Activated T-helper 2 cell treated with anti-CD3 and anti-CD28 coated beads, Interferon-gamma antibody, Interleukin-2, Interleukin-4, amounts not matched to agents 10 μg/mL and 5 μg/mL and 100 μg/mL, durations not matched to agents 14 hours and 24 hours and 36 hours (primary cell): ENCODE measurements at regions of chr6 and their contacts with region 1.

Region 1: DNA sequence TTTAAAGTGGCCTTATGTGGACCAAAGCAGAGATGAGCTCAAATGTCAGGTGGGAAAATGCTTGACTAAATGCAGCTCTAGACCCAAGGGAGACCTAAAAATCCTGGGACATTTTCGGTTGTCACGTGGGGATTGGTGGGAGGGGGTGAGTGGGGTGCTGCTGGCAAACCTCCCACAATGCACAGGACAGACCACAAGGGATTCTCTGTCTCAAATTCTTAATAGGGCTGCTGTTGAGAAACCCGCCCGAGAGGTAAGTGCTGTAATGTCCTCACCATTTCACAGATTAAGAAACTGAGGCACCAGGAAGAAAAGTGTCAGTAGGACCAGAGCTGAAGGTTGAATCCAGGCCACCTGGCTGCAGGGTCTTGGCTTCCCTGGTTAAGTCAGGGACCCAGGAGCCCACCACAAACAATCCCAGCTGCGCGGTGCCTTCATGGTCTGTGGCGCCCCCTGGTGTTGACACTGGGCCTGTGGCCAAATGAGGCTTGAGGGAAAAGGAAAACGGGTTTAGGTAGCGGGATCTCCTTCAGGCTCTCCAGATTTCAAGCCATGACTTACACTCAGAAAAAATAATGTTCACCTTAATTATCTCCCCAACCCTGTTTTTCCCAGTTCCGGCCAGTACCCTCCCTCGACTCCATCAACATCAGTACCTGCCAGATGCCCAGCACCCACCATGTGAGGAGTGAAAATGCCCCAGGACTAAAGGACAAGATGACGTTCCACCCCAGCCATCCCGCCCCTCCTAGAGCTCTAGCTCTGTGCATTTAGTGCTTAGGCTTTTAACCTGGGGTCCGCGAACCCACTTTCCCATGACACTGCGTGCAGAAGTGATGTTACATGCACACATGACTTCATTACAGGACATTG is 7.2 kb downstream of the HLA-G start:
- DNase-seq: no peak
- H3K4me3 Mint-ChIP-seq: no peak overlapping the region
- H3K27ac Mint-ChIP-seq: no peak overlapping the region
- H3K4me1 Mint-ChIP-seq: peaks cover 3% of the 10 kb centered on the region
- H3K27me3 Mint-ChIP-seq: peaks cover 69% of the 10 kb centered on the region

Region 2: GRCh38 chr6:29649701-29650673 is 184.8 kb before region 1 on chr6:
- intact Hi-C with region 1: loop called (anchors 5 kb)
- DNase-seq: peak; percentile 94
- H3K4me3 Mint-ChIP-seq: peak overlapping the region; percentile 88
- H3K27ac Mint-ChIP-seq: peak overlapping the region; percentile 98
- H3K4me1 Mint-ChIP-seq: peaks cover 7% of the 10 kb centered on the region
- H3K27me3 Mint-ChIP-seq: peaks cover 4% of the 10 kb centered on the region

Region 3: GRCh38 chr6:29705389-29706231 is 129.2 kb before region 1 on chr6:
- intact Hi-C with region 1: loop called (anchors 2 kb)
- DNase-seq: no peak
- H3K4me3 Mint-ChIP-seq: no peak overlapping the region
- H3K27ac Mint-ChIP-seq: no peak overlapping the region
- H3K4me1 Mint-ChIP-seq: peaks cover 40% of the 10 kb centered on the region
- H3K27me3 Mint-ChIP-seq: peaks cover 17% of the 10 kb centered on the region

Region 4: DNA sequence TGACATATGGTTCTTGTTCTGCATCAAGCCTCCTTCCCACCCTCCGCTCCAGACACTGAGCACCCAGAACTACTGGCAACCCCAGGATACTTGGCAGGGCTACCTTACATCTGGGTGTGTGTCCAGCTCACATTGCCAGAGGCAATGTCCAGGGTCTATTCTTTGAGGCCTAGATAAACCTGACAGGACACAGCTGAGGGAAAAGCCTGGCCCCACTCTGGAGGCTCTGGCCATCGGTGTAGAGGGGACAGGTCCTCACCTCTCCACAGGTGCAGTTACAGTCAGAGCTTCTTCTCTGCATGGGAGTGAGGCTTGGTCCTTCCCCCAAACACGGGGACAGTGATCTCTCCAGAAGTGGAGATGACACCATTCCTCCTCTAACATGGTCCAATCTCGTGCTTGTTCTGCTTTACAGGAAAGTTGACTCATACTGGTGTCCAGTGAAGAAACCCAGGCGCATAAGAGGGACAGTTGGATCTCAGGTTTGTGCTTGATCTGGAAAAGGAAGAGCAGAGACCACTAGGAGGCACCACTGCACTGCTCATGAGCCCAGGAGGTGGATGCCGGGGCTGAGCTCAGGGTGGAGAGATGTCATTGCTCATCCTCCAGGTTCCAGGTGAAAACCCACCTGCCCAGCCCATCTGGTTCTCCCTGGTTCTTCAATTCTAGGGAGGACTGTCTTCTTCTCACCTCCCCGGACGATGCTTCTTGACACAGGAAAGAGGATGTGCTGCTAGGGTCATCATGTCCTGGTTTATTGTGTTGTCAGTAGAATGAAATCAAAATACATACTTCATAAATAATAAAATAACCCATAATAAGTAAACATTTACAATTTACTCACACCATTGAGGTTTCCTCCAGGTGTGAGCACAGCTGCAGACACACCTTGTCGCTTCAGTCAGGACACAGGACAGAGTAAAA is 96.8 kb before region 1 on chr6:
- intact Hi-C with region 1: loop called (anchors 1 kb)
- DNase-seq: peak; percentile 58
- H3K4me3 Mint-ChIP-seq: no peak overlapping the region
- H3K27ac Mint-ChIP-seq: no peak overlapping the region
- H3K4me1 Mint-ChIP-seq: peaks cover 4% of the 10 kb centered on the region
- H3K27me3 Mint-ChIP-seq: no peaks in the 10 kb centered on the region

Region 5: DNA sequence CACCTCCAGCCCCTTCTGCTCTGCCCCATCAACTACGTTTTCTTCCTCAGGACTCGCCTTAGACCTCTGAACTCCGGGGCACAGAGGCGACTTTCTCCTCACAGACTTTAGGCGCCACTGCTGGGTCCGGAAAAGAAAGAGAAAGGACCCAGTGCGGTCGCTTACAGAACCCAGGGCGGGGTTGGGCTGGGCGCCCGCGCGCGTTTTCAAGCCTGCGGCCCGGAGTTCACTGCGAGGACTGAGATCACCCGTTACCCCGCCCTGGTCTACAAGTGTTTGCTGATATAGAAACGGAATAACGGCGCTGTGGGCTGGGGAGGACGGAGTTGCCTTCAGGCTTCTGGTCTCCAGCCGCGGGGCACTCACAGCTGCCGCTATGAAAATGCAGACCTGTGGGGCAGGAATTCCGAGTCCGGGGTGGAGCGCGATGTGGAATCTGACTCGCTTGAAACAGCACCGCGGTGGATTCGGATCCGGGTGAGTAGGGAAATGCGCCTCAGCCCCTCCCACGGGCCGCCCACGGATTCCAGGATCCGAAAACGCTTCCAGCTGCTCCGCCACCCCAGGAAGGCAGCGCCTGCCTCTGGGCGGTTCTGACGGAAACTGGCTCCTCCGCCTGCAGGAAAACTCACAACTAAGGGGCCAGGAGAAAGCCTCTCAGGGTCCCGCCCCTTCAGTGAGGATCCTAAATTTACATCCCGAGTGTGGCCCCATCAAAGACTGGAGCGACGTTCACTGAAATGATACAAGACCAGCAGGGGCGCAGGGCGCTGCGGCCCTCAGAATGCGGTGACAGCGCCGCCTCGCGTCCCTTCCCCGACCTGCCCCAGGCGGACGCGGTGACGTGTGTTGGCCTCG is 82.1 kb before region 1 on chr6:
- intact Hi-C with region 1: loop called (anchors 5 kb)
- DNase-seq: peak; percentile 79
- H3K4me3 Mint-ChIP-seq: peak overlapping the region; percentile 92
- H3K27ac Mint-ChIP-seq: peak overlapping the region; percentile 89
- H3K4me1 Mint-ChIP-seq: peaks cover 34% of the 10 kb centered on the region
- H3K27me3 Mint-ChIP-seq: no peaks in the 10 kb centered on the region